Left cardiac atrium (tissue), 4 donors: ENCODE measurements at regions of chr9 and their contacts with region 1.

Region 1: GRCh38 chr9:2620919-2621679 is 488 bp upstream of the VLDLR start:
- DNase-seq: peak; percentile 85
- ATAC-seq: peak; percentile 79 to 87

Region 2: GRCh38 chr9:1604942-1605560 is 1016.0 kb before region 1 on chr9:
- intact Hi-C with region 1: no loop called
- DNase-seq: no peak
- ATAC-seq: no peak

Region 3: GRCh38 chr9:2132484-2133082 is 488.5 kb before region 1 on chr9:
- intact Hi-C with region 1: loop called in 1 of 2 experiments (anchors 10 kb)
- DNase-seq: no peak
- ATAC-seq: peak; percentile 38 to 41

Region 4: GRCh38 chr9:2494562-2494961 is 126.5 kb before region 1 on chr9:
- intact Hi-C with region 1: loop called (anchors 10 kb)
- DNase-seq: no peak
- ATAC-seq: peak in 1 of 2 donors; percentile 71

Region 5: GRCh38 chr9:2570615-2571479 is 50.3 kb before region 1 on chr9:
- intact Hi-C with region 1: loop called in 1 of 2 experiments (anchors 5 kb)
- DNase-seq: peak; percentile 90
- ATAC-seq: peak; percentile 91 to 94

Region 6: DNA sequence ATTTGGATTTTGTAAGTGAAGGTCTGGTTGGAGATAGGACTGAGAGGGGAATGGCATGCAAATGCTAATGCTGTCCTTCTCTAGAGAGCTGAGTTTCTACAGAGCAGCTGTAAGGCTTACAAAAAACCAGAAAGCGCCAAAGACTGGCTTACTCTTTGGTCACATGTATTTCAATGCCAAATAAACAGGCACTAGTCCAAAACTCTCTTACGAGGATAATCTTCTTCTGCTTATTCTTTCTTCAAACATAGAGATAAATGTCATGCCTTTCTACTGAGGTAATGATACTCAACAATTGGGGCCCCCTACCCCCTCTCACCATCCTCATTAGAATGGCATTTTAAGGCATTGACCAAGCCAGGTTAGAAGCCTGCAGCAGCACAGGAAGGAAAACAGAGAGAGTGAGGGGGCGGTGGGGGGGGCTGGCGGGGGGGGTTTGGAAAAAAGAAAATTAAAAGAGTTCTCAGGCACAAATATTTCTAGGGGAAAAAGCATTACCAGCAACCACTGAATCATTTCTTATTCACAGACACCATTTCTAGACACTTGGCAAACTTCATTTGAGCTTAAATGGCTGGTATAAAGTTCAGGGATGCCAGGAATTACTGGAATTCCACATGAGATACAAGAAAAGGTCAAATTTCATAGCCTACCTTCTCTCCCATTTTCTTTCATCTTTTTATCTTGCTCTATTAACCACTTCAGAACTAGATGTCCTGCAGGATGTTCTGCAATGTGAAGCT is 188.8 kb after region 1 on chr9:
- intact Hi-C with region 1: loop called in 1 of 2 experiments (anchors 10 kb)
- DNase-seq: no peak
- ATAC-seq: peak; percentile 92 to 94